Ovary (tissue), 10 donors: ENCODE measurements at regions of chr16 and their contacts with region 1.

Region 1: GRCh38 chr16:13973321-13974023 is 53.5 kb downstream of the ERCC4 start:
- DNase-seq: no peak
- H3K4me3 ChIP-seq: no peak overlapping the region
- H3K27ac ChIP-seq: no peak overlapping the region
- H3K4me1 ChIP-seq: no peaks in the 10 kb centered on the region
- H3K27me3 ChIP-seq: no peaks in the 10 kb centered on the region
- CTCF ChIP-seq: no peak
- EP300 ChIP-seq: no peak
- POLR2A ChIP-seq: no peak

Region 2: DNA sequence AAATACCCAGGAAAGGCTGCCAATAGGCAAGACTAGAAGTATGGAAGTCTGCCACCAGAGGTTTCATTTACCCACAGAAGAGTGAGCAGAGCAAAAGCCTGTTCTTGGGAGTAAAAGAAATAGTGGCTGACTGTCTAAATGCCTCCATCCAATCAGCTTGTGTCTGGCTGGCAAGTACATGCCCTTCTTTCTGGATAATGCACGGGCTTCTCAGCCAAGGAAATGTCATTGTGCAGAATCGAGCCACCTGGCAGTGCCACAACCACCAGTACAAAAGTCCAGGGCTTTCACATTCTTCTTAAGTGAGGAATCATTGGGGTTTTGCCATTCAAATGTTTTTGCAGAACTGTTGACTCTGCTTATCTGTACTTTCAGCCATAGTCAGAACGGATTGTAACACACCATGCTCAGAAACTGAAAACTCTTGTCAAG is 63.6 kb before region 1 on chr16:
- intact Hi-C with region 1: loop called in 1 of 4 experiments (anchors 2 kb)
- DNase-seq: peak; percentile 44 to 86 (median 75)
- H3K4me3 ChIP-seq: no peak overlapping the region
- H3K27ac ChIP-seq: peak overlapping the region in 1 of 2 donors; percentile 48
- H3K4me1 ChIP-seq: peaks cover 14% of the 10 kb centered on the region
- H3K27me3 ChIP-seq: no peaks in the 10 kb centered on the region
- CTCF ChIP-seq: no peak
- EP300 ChIP-seq: no peak
- POLR2A ChIP-seq: no peak

Region 3: GRCh38 chr16:14101415-14101814 is 127.9 kb after region 1 on chr16:
- intact Hi-C with region 1: no loop called
- DNase-seq: no peak
- H3K4me3 ChIP-seq: no peak overlapping the region
- H3K27ac ChIP-seq: no peak overlapping the region
- H3K4me1 ChIP-seq: peaks cover 3% of the 10 kb centered on the region
- H3K27me3 ChIP-seq: no peaks in the 10 kb centered on the region
- CTCF ChIP-seq: no peak
- EP300 ChIP-seq: no peak
- POLR2A ChIP-seq: no peak